MCF 10A (cell line): ENCODE measurements at regions of chr6 and their contacts with region 1.

Region 1: GRCh38 chr6:100479179-100480035 is 14.7 kb upstream of the SIM1 start:
- DNase-seq: peak; percentile 55
- H3K4me3 Mint-ChIP-seq: no peak overlapping the region
- H3K27ac Mint-ChIP-seq: no peak overlapping the region
- H3K4me1 Mint-ChIP-seq: peaks cover 8% of the 10 kb centered on the region
- H3K27me3 Mint-ChIP-seq: no peaks in the 10 kb centered on the region
- CTCF ChIP-seq: peak; percentile 79

Region 2: DNA sequence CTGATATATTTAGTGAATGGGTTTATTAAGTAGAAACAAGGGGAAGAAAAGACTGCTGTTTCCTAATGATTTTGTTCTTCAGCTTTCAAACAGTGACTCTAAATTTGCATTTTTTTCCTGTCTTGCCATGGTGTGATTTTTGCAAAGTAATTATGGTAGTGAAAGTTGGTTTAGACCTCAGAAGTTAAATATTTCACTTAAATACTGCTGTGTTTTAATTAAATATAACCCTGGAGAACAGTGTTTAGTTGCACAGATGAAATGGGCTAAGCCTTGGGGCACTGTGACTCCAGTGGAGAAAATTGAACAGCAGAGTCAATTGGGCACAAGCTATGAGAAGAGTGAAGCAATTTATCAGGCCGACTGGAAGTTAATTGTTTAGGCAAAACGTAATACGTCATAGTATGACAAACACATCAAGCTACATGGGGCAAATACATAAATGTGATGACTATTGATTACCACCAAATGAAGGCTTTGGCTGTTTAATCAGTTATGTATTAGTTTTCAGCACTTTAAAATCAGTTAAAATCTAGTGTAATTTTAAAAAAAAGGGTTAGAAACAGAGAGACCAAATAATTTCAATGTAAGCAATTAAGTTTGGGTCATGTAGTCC is 374.2 kb before region 1 on chr6:
- CTCF ChIA-PET with region 1: interaction called, 32 read pairs
- POLR2A ChIA-PET with region 1: no interaction called
- intact Hi-C with region 1: loop called (anchors 2 kb)
- DNase-seq: no peak
- H3K4me3 Mint-ChIP-seq: no peak overlapping the region
- H3K27ac Mint-ChIP-seq: no peak overlapping the region
- H3K4me1 Mint-ChIP-seq: peaks cover 5% of the 10 kb centered on the region
- H3K27me3 Mint-ChIP-seq: no peaks in the 10 kb centered on the region
- CTCF ChIP-seq: no peak

Region 3: DNA sequence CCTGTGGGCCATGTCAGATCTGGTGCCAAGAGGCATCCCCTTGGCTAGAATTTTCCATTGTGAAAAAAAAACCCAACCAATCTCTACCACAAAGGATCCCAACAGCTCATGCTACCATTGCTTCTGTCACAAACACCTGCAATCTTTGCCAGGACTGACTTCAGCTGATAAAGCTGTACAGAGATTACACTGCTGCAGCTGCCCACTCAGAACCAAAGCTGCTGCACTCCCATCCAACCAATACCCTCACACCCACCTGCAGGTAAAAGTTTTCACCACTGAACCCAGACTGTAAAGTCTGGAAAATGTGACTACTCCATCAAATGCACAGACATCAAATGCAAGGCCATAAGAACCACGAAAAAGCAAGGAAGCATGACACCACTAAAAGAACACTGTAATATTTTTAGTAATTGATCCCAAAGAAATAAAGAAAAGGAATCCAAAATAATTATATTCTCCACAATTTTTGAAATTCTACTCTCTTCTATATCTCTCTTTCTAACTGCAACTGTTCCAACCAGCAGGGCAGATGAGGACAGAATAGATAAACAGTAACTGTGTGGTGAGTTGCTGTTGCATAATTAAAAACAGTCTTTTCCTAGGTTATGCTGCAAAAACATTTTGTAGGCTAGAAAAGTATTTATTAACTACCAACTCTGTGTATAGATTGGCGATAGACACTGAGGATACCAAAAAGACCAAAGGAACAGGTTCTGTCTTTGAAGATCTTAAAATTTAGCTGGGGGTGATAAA is 357.4 kb before region 1 on chr6:
- CTCF ChIA-PET with region 1: interaction called, 123 read pairs
- POLR2A ChIA-PET with region 1: interaction called, 4 read pairs
- intact Hi-C with region 1: no loop called
- DNase-seq: no peak
- H3K4me3 Mint-ChIP-seq: no peak overlapping the region
- H3K27ac Mint-ChIP-seq: no peak overlapping the region
- H3K4me1 Mint-ChIP-seq: no peaks in the 10 kb centered on the region
- H3K27me3 Mint-ChIP-seq: no peaks in the 10 kb centered on the region
- CTCF ChIP-seq: no peak

Region 4: DNA sequence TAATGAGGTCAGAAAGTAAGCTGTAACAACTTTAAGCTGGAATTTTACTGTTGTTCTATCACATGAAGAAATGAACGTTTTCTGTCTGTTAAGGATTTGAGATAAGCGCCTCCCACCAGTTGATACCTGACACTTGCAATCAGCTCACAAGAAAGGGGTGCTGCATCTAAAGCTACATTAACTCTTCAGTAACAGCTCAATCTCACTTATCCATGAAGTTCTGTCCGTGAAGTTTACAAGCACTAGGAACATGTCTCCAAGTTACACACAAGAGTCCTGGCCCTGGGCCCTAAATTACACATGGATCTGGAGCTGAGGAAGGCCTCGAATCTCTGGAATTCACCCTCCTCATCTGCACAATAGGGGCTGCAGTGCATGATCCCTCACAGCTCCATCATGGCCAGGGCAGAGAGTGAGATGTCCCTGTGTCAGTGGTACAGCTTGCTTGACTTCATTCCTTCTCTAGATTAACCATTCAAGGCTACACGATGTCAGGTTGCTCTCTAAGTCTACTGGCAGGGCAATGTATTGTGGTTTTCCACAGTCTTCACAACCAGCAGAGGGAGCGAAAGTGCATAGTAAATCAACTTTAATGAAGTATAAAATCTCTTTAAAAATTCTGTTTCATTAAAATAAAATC is 303.0 kb before region 1 on chr6:
- CTCF ChIA-PET with region 1: interaction called, 10 read pairs
- POLR2A ChIA-PET with region 1: no interaction called
- intact Hi-C with region 1: loop called (anchors 2 kb)
- DNase-seq: peak; percentile 62
- H3K4me3 Mint-ChIP-seq: peak overlapping the region; percentile 23
- H3K27ac Mint-ChIP-seq: peak overlapping the region; percentile 88
- H3K4me1 Mint-ChIP-seq: peaks cover 28% of the 10 kb centered on the region
- H3K27me3 Mint-ChIP-seq: no peaks in the 10 kb centered on the region
- CTCF ChIP-seq: peak; percentile 27

Region 5: GRCh38 chr6:100322886-100323285 is 156.5 kb before region 1 on chr6:
- CTCF ChIA-PET with region 1: no interaction called
- POLR2A ChIA-PET with region 1: no interaction called
- intact Hi-C with region 1: loop called (anchors 1 kb)
- DNase-seq: no peak
- H3K4me3 Mint-ChIP-seq: no peak overlapping the region
- H3K27ac Mint-ChIP-seq: no peak overlapping the region
- H3K4me1 Mint-ChIP-seq: no peaks in the 10 kb centered on the region
- H3K27me3 Mint-ChIP-seq: no peaks in the 10 kb centered on the region
- CTCF ChIP-seq: no peak

Region 6: DNA sequence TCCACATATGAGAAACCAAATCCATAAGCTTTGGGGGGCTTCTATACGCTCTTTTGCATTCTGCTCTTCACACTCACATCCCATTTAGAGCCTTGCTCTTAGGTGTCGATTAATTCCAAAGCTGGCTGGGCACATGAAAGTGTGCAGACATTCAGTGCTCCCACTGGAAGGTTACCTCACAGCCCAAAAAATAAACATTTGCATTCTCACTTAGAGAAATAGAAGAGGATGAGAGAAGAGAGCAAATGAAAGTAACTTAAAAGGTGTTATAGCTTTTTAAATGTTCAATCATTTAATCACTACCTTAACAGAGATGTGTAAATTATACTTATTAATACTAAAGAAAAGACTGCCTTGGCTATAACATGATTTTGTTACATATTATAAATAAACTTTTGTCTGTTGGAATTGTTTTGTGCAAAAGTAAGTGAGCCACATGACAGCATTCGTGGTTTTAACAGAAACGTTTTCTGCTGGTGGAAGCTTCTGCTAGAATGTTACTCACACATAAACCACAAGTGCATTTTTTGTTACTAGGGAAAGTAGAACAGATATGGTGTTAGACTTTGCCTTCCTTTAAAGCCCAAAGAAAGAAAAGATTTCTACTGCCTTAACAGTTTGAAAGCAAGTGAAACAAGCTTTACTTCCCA is 131.4 kb before region 1 on chr6:
- CTCF ChIA-PET with region 1: no interaction called
- POLR2A ChIA-PET with region 1: no interaction called
- intact Hi-C with region 1: no loop called
- DNase-seq: no peak
- H3K4me3 Mint-ChIP-seq: no peak overlapping the region
- H3K27ac Mint-ChIP-seq: no peak overlapping the region
- H3K4me1 Mint-ChIP-seq: peaks cover 29% of the 10 kb centered on the region
- H3K27me3 Mint-ChIP-seq: no peaks in the 10 kb centered on the region
- CTCF ChIP-seq: no peak

Region 7: DNA sequence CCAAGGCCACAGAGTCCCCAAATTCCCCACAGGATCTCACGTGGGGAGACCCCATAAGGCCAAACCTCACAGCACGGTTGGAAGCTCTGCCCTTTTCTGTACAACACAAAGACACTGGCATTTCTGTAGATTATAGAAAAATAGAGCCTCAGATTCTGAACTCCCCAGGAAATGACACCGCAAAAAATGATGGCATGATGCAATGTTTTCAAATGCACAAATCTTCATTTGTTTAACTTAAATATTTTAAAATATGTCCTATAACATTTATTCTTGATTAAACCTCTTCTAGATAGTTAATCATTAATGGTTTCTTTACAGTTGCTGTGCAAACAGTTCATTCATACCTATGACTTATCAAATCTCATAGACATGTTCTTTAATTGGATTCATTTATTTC is 48.4 kb before region 1 on chr6:
- CTCF ChIA-PET with region 1: no interaction called
- POLR2A ChIA-PET with region 1: no interaction called
- intact Hi-C with region 1: no loop called
- DNase-seq: no peak
- H3K4me3 Mint-ChIP-seq: no peak overlapping the region
- H3K27ac Mint-ChIP-seq: no peak overlapping the region
- H3K4me1 Mint-ChIP-seq: peaks cover 4% of the 10 kb centered on the region
- H3K27me3 Mint-ChIP-seq: no peaks in the 10 kb centered on the region
- CTCF ChIP-seq: no peak

Region 8: GRCh38 chr6:100657678-100658330 is 178.4 kb after region 1 on chr6:
- CTCF ChIA-PET with region 1: interaction called, 4 read pairs
- POLR2A ChIA-PET with region 1: no interaction called
- intact Hi-C with region 1: loop called (anchors 5 kb)
- DNase-seq: peak; percentile 34
- H3K4me3 Mint-ChIP-seq: no peak overlapping the region
- H3K27ac Mint-ChIP-seq: no peak overlapping the region
- H3K4me1 Mint-ChIP-seq: peaks cover 3% of the 10 kb centered on the region
- H3K27me3 Mint-ChIP-seq: no peaks in the 10 kb centered on the region
- CTCF ChIP-seq: peak; percentile 47